ENCODE measurements at regions of chr4 and their contacts with region 1.

Region 1: DNA sequence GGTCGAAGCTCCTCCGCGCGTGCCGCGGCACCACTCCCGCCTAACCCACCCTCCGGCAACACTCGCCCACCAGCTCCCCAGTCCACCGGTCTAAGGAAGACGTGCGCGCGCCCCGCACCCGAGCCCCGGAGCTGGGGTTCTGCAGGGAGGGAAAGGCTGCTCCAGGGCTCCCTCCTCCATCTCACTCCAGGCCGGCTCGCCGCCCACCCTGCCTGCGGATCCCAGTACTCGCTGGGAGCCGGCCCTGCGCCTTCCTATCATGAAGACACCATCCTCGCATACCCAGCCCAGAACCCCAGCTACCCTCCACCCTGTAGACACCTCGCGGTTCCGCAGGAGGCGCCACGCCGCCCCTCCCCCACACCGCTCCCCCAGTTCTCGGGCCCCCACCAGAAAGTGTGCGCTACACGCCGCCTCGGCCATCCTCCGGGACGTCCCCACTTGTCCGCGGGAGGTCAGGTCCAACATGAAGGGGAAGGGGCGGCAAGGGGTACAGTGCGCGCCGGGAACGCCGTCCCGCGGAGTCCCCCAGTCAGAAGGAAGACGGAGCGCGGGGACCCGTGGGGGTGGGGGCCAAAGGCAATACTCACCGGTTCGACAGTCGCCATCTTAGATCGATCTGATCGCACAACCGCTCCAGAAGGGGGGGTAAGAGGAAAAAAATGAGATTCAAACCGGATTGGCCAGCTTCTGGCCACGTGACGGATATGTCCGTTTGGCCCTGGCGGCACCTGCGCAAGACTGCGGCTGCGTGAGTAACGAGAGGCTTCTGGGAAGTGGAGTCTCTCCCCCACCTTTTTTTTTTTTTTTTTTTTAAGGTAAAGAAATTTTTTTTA is at the start of gene EIF4E:
- DNase-seq: peak; percentile 81 to 99 (median 97)
- ATAC-seq: peak; percentile 88
- H3K4me3 ChIP-seq: peak within 1 kb of the TSS; percentile 96
- H3K4me3 Mint-ChIP-seq: peak within 1 kb of the TSS; percentile 91 to 100 (median 96)
- H3K27ac ChIP-seq: peak within 1 kb of the TSS; percentile 88
- H3K27ac Mint-ChIP-seq: peak within 1 kb of the TSS; percentile 88 to 98 (median 97)
- H3K4me1 ChIP-seq: peaks cover 9 to 15% of the 10 kb centered on the region in 2 donors
- H3K4me1 Mint-ChIP-seq: peaks cover 12 to 52% (median 38%) of the 10 kb centered on the region in 7 donors
- H3K27me3 ChIP-seq: no peaks in the 10 kb centered on the region
- H3K27me3 Mint-ChIP-seq: peaks cover 0 to 4% (median 0%) of the 10 kb centered on the region in 5 donors
- total RNA-seq, gene EIF4E: 53.6 to 96.1 (median 63.0) TPM

Region 2: GRCh38 chr4:97747945-97748344 is 1180.8 kb before region 1 on chr4:
- CTCF ChIA-PET with region 1: no interaction called
- POLR2A ChIA-PET with region 1: no interaction called
- intact Hi-C with region 1: no loop called
- DNase-seq: no peak
- ATAC-seq: no peak
- H3K4me3 ChIP-seq: no peak overlapping the region
- H3K4me3 Mint-ChIP-seq: no peak overlapping the region
- H3K27ac ChIP-seq: no peak overlapping the region
- H3K27ac Mint-ChIP-seq: no peak overlapping the region
- H3K4me1 ChIP-seq: no peaks in the 10 kb centered on the region
- H3K4me1 Mint-ChIP-seq: no peaks in the 10 kb centered on the region
- H3K27me3 ChIP-seq: no peaks in the 10 kb centered on the region
- H3K27me3 Mint-ChIP-seq: no peaks in the 10 kb centered on the region

Region 3: GRCh38 chr4:98446499-98447375 is 482.0 kb before region 1 on chr4:
- CTCF ChIA-PET with region 1: no interaction called
- POLR2A ChIA-PET with region 1: interaction called, 3 read pairs
- intact Hi-C with region 1: loop called in 1 of 2 experiments (anchors 1 kb)
- DNase-seq: peak in 7 of 9 donors; percentile 23 to 53 (median 42)
- ATAC-seq: peak; percentile 89
- H3K4me3 ChIP-seq: peak overlapping the region; percentile 9
- H3K4me3 Mint-ChIP-seq: peak overlapping the region; percentile 49 to 75 (median 71)
- H3K27ac ChIP-seq: no peak overlapping the region
- H3K27ac Mint-ChIP-seq: peak overlapping the region; percentile 52 to 88 (median 76)
- H3K4me1 ChIP-seq: peaks cover 30 to 39% of the 10 kb centered on the region in 2 donors
- H3K4me1 Mint-ChIP-seq: peaks cover 33 to 44% (median 37%) of the 10 kb centered on the region in 7 donors
- H3K27me3 ChIP-seq: no peaks in the 10 kb centered on the region
- H3K27me3 Mint-ChIP-seq: no peaks in the 10 kb centered on the region

Region 4: GRCh38 chr4:98890702-98891455 is 37.8 kb before region 1 on chr4:
- CTCF ChIA-PET with region 1: no interaction called
- POLR2A ChIA-PET with region 1: no interaction called
- intact Hi-C with region 1: loop called in 1 of 2 experiments (anchors 2 kb)
- DNase-seq: no peak
- ATAC-seq: no peak
- H3K4me3 ChIP-seq: no peak overlapping the region
- H3K4me3 Mint-ChIP-seq: no peak overlapping the region
- H3K27ac ChIP-seq: no peak overlapping the region
- H3K27ac Mint-ChIP-seq: peak overlapping the region in 4 of 9 donors; percentile 36 to 49 (median 40)
- H3K4me1 ChIP-seq: no peaks in the 10 kb centered on the region
- H3K4me1 Mint-ChIP-seq: peaks cover 6 to 39% (median 22%) of the 10 kb centered on the region in 7 donors
- H3K27me3 ChIP-seq: no peaks in the 10 kb centered on the region
- H3K27me3 Mint-ChIP-seq: no peaks in the 10 kb centered on the region

Region 5: DNA sequence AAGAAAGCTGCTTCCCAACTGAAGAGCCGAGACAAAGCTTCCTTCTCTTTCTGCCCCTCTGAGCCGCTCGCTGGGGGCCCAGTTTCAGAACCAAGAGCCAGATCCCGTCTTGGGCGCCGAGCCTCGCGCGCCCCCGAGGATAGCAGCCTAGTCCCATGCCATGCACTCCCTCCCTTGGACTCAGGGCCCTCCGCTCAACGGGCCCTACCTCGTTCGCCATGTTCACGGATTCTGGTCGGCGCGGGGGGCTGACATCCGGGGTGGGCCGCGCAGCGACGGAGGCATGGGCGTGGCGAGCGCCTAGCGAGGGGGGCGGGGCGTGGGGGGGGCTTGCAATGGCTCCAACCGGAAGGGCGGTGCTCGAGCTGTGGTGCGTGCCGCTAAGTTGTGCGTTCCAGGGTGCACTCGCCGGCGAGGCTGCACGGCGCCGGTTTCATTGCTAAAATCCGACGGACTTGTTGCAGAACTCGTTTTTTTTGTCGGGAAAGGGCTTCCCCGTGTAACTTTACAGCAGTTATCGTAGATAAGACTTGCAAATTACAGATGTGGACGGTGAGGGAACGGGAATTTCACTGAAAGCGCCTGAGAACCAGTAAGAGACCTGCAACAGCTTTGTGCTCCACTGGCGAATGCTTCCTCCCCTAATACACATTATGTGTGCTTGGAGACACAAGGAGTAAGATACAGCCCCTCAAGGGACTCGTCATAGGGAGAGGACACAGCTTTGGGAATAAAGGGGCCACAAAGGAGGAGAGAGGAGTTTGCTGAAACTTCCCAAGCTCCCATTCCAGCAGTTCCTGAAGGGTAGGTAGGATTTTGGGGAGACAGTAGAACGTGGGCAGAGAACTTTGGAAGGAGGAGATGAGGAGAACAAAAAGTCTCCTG is 160.0 kb after region 1 on chr4 and contains the start of gene ADH5:
- CTCF ChIA-PET with region 1: no interaction called
- POLR2A ChIA-PET with region 1: interaction called, 17 read pairs
- intact Hi-C with region 1: loop called (anchors 1 kb)
- DNase-seq: peak; percentile 75 to 90 (median 85)
- ATAC-seq: peak; percentile 98
- H3K4me3 ChIP-seq: peak within 1 kb of the TSS; percentile 98
- H3K4me3 Mint-ChIP-seq: peak within 1 kb of the TSS; percentile 93 to 99 (median 98)
- H3K27ac ChIP-seq: peak within 1 kb of the TSS; percentile 85
- H3K27ac Mint-ChIP-seq: peak within 1 kb of the TSS; percentile 94 to 99 (median 98)
- H3K4me1 ChIP-seq: peaks cover 8 to 9% of the 10 kb centered on the region in 2 donors
- H3K4me1 Mint-ChIP-seq: peaks cover 28 to 67% (median 57%) of the 10 kb centered on the region in 7 donors
- H3K27me3 ChIP-seq: no peaks in the 10 kb centered on the region
- H3K27me3 Mint-ChIP-seq: peaks cover 0 to 11% (median 0%) of the 10 kb centered on the region in 5 donors
- total RNA-seq, gene ADH5: 42.7 to 102 (median 74.0) TPM

Region 6: DNA sequence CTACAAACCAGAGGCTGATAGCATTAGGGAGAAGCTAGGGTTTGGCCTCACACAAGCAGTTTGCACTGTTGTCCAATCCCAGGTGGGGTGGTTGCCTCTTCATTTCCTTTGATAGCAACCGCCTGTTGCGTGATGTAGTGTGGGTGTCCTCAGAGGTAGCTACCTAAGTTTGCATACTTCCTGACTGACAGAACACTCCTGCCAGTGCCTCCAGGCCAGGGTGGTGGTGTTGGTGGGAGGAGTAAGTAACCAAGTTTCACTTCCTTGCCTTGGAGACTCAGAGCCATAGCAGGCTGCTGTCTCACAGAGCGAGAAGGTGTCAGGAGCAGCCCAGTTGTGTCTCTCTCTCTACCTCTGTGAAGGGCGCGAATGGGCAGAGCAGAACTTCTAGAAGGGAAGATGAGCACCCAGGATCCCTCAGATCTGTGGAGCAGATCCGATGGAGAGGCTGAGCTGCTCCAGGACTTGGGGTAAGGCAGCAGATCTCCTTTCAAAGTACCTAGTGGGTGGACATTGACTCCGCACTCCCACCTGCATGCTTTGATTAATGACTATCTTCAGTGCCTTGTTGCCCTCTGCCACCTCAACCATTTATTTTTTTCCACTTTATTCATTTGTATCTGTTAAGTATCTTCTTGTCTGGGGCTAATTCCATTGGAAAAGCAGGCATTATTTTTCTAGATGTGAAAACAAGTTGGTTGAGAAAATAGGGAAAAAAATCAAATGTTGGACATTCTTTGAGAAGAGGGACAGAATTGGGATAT is 888.0 kb after region 1 on chr4 and contains the start of gene DAPP1:
- CTCF ChIA-PET with region 1: no interaction called
- POLR2A ChIA-PET with region 1: no interaction called
- intact Hi-C with region 1: loop called in 1 of 2 experiments (anchors 1 kb)
- DNase-seq: peak; percentile 44 to 88 (median 84)
- ATAC-seq: peak; percentile 95
- H3K4me3 ChIP-seq: peak within 1 kb of the TSS; percentile 71
- H3K4me3 Mint-ChIP-seq: peak within 1 kb of the TSS; percentile 71 to 95 (median 92)
- H3K27ac ChIP-seq: peak within 1 kb of the TSS; percentile 77
- H3K27ac Mint-ChIP-seq: peak within 1 kb of the TSS; percentile 87 to 98 (median 96)
- H3K4me1 ChIP-seq: peaks cover 16 to 32% of the 10 kb centered on the region in 2 donors
- H3K4me1 Mint-ChIP-seq: peaks cover 41 to 72% (median 63%) of the 10 kb centered on the region in 7 donors
- H3K27me3 ChIP-seq: no peaks in the 10 kb centered on the region
- H3K27me3 Mint-ChIP-seq: no peaks in the 10 kb centered on the region
- total RNA-seq, gene DAPP1: 10.9 to 49.6 (median 20.7) TPM